ENCODE measurements at regions of chr16 and their contacts with region 1.

Region 1: DNA sequence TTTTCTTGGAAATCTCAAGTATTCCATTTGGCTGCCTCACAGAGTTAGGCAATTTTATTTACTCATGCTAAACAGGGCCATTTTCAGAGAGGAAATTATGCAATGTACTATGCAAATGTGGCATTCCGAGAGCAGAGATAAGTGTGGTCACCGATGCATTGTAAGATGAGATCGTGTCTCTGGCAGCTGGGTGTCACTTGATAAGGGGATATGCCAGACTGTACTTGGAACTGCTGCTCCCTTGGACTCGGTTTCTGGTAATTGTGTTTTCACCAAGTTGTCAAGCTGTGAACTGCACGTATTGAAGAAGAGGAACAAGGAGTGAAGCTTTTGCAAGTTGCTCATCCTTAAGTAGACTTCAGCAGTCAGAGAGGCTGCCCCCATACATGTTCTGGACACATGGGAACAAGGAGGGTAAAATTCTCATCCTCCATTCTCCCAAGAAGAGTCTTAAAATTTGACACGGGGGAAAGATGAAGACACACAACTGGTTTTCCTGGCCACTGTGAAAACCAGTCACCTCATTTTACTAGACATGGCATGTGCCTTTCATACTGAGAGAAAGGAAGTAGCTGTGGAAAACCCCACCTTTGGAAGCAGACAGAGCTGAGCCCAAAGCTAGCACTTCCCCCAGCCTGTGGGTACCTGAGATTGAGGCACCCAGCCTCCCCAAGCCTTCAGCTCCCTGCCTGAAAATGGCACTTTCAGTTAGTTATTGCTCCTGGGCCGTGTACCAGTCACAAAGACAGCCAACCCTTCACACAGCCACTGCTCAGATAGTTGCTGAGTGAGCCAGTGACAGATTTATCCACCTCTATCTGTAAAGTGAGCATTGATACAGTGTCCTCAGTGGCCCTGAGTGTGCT is 150.7 kb downstream of the SOCS1 start:
- DNase-seq: no peak
- ATAC-seq: peak; percentile 71

Region 2: GRCh38 chr16:10971560-10971961 is 133.7 kb before region 1 on chr16:
- intact Hi-C with region 1: loop called (anchors 10 kb)
- DNase-seq: no peak
- ATAC-seq: peak; percentile 78

Measured in Right ventricle myocardium superior (tissue), 1 donor.